Testis (tissue), 5 donors: ENCODE measurements at regions of chr9 and their contacts with region 1.

Region 1: GRCh38 chr9:86486891-86487837 is 133.0 kb upstream of the TUT7 start:
- DNase-seq: no peak
- H3K4me3 ChIP-seq: no peak overlapping the region
- H3K27ac ChIP-seq: no peak overlapping the region
- H3K4me1 ChIP-seq: no peaks in the 10 kb centered on the region
- H3K27me3 ChIP-seq: no peaks in the 10 kb centered on the region
- CTCF ChIP-seq: peak; percentile 52 to 63 (median 56)
- POLR2A ChIP-seq: no peak

Region 2: GRCh38 chr9:86413966-86414880 is 72.9 kb before region 1 on chr9:
- intact Hi-C with region 1: loop called (anchors 5 kb)
- DNase-seq: no peak
- H3K4me3 ChIP-seq: no peak overlapping the region
- H3K27ac ChIP-seq: no peak overlapping the region
- H3K4me1 ChIP-seq: no peaks in the 10 kb centered on the region
- H3K27me3 ChIP-seq: no peaks in the 10 kb centered on the region
- CTCF ChIP-seq: peak; percentile 39 to 84 (median 59)
- POLR2A ChIP-seq: no peak

Region 3: DNA sequence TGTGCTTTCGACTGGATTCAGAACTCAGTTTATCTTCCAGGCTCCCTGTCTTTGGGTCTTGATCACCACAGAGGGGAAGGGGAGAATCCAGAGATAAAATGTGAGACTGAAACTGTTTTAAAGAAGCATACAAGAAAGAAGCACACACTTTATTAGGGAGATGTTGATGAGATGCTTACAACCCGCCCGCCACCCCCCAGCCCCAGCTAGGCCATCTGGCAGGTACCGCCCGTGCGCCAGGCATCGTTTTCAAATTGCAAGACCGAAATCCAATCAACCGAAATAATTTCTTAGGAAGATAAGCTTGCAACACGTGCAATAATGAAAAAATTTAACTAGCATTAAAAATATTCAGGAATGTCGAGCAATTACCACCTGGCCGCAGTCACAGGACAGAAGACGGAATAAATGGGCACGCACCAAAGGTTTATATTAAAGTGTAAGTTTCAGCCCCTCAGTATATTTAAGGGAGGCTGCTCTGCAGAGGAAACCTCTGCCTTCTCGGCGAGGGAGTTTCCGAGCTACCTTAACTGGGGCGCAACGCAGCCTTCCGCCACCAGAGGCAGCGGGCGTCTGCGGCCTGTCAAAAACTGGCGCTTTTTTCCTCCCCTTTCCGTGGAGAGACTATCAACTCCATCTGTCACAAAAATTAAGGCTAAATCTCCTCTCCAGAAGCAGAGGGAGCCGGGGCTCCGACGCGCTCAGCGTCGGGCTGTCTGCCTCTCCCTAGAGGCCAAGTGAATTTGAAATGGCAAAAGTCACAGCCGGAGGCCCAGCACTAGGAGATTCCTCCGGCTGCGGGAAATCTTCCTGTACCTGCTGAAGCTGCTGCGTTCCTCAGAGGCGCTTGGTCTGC is 461.1 kb after region 1 on chr9:
- intact Hi-C with region 1: loop called (anchors 5 kb)
- DNase-seq: peak; percentile 86
- H3K4me3 ChIP-seq: peak overlapping the region; percentile 77 to 84
- H3K27ac ChIP-seq: peak overlapping the region; percentile 84 to 89
- H3K4me1 ChIP-seq: peaks cover 24% of the 10 kb centered on the region
- H3K27me3 ChIP-seq: no peaks in the 10 kb centered on the region
- CTCF ChIP-seq: peak; percentile 71 to 86 (median 78)
- POLR2A ChIP-seq: no peak

Region 4: GRCh38 chr9:87324613-87325194 is 837.5 kb after region 1 on chr9:
- intact Hi-C with region 1: loop called (anchors 10 kb)
- DNase-seq: no peak
- H3K4me3 ChIP-seq: no peak overlapping the region
- H3K27ac ChIP-seq: no peak overlapping the region
- H3K4me1 ChIP-seq: no peaks in the 10 kb centered on the region
- H3K27me3 ChIP-seq: no peaks in the 10 kb centered on the region
- CTCF ChIP-seq: peak; percentile 71 to 92 (median 88)
- POLR2A ChIP-seq: no peak